CD4-positive, alpha-beta T cell (primary cell): ENCODE measurements at regions of chr15 and their contacts with region 1.

Region 1: DNA sequence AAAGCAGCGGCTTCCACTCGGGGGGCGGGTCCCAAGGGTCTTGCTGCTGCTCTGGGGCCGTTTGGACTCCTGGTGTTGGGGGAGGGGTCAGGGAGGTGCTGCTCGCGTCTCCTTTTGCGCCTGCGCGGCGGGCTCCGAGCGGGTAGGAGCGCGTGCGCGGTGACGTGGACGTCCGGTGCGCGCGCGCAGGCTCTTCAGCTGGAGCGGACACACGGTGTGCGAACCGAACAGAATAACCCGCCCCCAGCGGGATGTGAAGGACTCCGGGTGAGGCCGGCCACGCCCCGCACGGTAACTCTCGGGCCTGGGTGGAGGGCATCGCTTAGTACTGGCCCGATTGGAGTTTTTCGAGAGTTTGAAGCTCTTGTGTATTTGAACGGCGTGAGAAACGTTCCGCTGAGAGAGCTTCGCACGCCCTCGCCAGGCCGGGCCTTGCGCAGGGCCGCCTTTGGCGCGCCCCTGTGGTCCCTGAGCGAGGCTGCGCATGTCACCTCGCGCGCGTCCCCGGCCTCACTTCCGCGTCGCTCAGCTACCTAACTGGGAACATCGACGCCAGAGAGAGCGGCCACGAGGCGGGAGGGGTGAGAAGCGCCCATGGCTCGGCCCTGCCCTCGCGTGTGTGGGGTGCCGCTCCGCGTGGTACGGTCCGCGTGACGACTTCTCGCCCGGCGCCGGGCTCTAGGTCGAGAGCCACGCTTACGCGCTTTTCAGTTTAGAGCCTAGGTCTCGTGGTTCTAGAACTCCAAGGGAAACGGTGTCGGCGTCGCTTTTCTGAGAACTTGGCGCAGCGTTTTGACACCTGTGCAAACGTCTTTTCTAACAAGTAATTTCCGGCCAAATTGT is at the start of gene MGA:
- DNase-seq: peak; percentile 77 to 96 (median 89)
- ATAC-seq: peak; percentile 79
- H3K4me3 ChIP-seq: peak within 1 kb of the TSS; percentile 65
- H3K4me3 Mint-ChIP-seq: peak within 1 kb of the TSS; percentile 83
- H3K27ac ChIP-seq: peak within 1 kb of the TSS; percentile 81 to 91
- H3K27ac Mint-ChIP-seq: peak within 1 kb of the TSS; percentile 89
- H3K4me1 ChIP-seq: peaks cover 32% of the 10 kb centered on the region
- H3K4me1 Mint-ChIP-seq: peaks cover 66% of the 10 kb centered on the region
- H3K27me3 ChIP-seq: no peaks in the 10 kb centered on the region
- H3K27me3 Mint-ChIP-seq: no peaks in the 10 kb centered on the region
- CTCF ChIP-seq: no peak
- total RNA-seq, gene MGA: 31.0 to 33.9 TPM

Region 2: GRCh38 chr15:41621200-41622193 is 39.0 kb before region 1 on chr15:
- CTCF ChIA-PET with region 1: no interaction called
- POLR2A ChIA-PET with region 1: interaction called, 46 read pairs
- intact Hi-C with region 1: loop called (anchors 2 to 5 kb)
- DNase-seq: peak; percentile 46 to 92 (median 70)
- ATAC-seq: peak; percentile 75
- H3K4me3 ChIP-seq: peak overlapping the region; percentile 64
- H3K4me3 Mint-ChIP-seq: peak overlapping the region; percentile 69
- H3K27ac ChIP-seq: no peak overlapping the region
- H3K27ac Mint-ChIP-seq: peak overlapping the region; percentile 73
- H3K4me1 ChIP-seq: peaks cover 19% of the 10 kb centered on the region
- H3K4me1 Mint-ChIP-seq: peaks cover 32% of the 10 kb centered on the region
- H3K27me3 ChIP-seq: no peaks in the 10 kb centered on the region
- H3K27me3 Mint-ChIP-seq: no peaks in the 10 kb centered on the region
- CTCF ChIP-seq: no peak

Region 3: GRCh38 chr15:41671656-41672648 is 11.5 kb after region 1 on chr15:
- CTCF ChIA-PET with region 1: interaction called, 3 read pairs
- POLR2A ChIA-PET with region 1: interaction called, 23 read pairs
- intact Hi-C with region 1: no loop called
- DNase-seq: no peak
- ATAC-seq: no peak
- H3K4me3 ChIP-seq: no peak overlapping the region
- H3K4me3 Mint-ChIP-seq: no peak overlapping the region
- H3K27ac ChIP-seq: no peak overlapping the region
- H3K27ac Mint-ChIP-seq: peak overlapping the region; percentile 56
- H3K4me1 ChIP-seq: peaks cover 16% of the 10 kb centered on the region
- H3K4me1 Mint-ChIP-seq: peaks cover 69% of the 10 kb centered on the region
- H3K27me3 ChIP-seq: no peaks in the 10 kb centered on the region
- H3K27me3 Mint-ChIP-seq: no peaks in the 10 kb centered on the region
- CTCF ChIP-seq: no peak

Region 4: DNA sequence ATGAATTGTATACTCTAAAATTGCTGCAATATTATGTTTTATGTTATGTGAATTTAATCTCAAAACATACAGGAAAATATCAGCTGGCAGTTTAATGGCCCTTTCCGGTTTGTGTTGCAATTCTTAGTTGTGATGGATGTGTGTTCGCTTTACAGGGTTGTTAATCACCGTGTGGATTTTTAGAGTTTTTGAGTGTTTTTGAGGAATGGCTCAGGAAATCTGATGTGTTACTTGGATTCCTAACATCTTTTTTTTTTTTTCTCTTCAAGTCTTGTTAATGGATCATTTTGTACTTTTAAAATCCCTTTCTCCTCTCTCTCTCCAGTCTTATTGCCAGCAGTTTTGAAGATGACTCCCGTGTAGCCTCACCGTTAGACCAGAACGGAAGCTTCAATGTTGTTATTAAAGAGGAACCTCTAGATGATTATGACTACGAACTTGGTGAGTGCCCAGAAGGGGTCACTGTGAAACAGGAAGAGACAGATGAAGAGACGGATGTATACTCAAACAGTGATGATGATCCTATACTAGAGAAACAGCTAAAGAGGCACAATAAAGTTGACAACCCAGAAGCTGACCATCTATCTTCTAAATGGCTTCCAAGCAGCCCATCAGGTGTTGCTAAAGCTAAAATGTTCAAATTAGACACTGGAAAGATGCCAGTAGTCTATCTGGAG is 35.4 kb after region 1 on chr15:
- CTCF ChIA-PET with region 1: interaction called, 12 read pairs
- POLR2A ChIA-PET with region 1: interaction called, 12 read pairs
- intact Hi-C with region 1: no loop called
- DNase-seq: peak in 12 of 14 experiments; percentile 7 to 78 (median 32)
- ATAC-seq: peak; percentile 96
- H3K4me3 ChIP-seq: no peak overlapping the region
- H3K4me3 Mint-ChIP-seq: peak overlapping the region; percentile 8
- H3K27ac ChIP-seq: no peak overlapping the region
- H3K27ac Mint-ChIP-seq: peak overlapping the region; percentile 54
- H3K4me1 ChIP-seq: peaks cover 7% of the 10 kb centered on the region
- H3K4me1 Mint-ChIP-seq: peaks cover 51% of the 10 kb centered on the region
- H3K27me3 ChIP-seq: no peaks in the 10 kb centered on the region
- H3K27me3 Mint-ChIP-seq: no peaks in the 10 kb centered on the region
- CTCF ChIP-seq: peak; percentile 63

Region 5: GRCh38 chr15:42273102-42273899 is 612.8 kb after region 1 on chr15 and contains the starts of genes GANC and TMEM87A:
- CTCF ChIA-PET with region 1: no interaction called
- POLR2A ChIA-PET with region 1: interaction called, 11 read pairs
- intact Hi-C with region 1: no loop called
- DNase-seq: peak; percentile 90 to 99 (median 94)
- ATAC-seq: peak; percentile 89
- H3K4me3 ChIP-seq: peak within 1 kb of the TSS; percentile 70
- H3K4me3 Mint-ChIP-seq: peak within 1 kb of the TSS; percentile 90
- H3K27ac ChIP-seq: peak within 1 kb of the TSS; percentile 92 to 95
- H3K27ac Mint-ChIP-seq: peak within 1 kb of the TSS; percentile 98
- H3K4me1 ChIP-seq: peaks cover 12% of the 10 kb centered on the region
- H3K4me1 Mint-ChIP-seq: peaks cover 76% of the 10 kb centered on the region
- H3K27me3 ChIP-seq: no peaks in the 10 kb centered on the region
- H3K27me3 Mint-ChIP-seq: no peaks in the 10 kb centered on the region
- CTCF ChIP-seq: no peak
- total RNA-seq, gene GANC: 22.3 to 23.9 TPM
- total RNA-seq, gene TMEM87A: 48.7 to 51.4 TPM